ENCODE measurements at regions of chr7 and their contacts with region 1.

Region 1: DNA sequence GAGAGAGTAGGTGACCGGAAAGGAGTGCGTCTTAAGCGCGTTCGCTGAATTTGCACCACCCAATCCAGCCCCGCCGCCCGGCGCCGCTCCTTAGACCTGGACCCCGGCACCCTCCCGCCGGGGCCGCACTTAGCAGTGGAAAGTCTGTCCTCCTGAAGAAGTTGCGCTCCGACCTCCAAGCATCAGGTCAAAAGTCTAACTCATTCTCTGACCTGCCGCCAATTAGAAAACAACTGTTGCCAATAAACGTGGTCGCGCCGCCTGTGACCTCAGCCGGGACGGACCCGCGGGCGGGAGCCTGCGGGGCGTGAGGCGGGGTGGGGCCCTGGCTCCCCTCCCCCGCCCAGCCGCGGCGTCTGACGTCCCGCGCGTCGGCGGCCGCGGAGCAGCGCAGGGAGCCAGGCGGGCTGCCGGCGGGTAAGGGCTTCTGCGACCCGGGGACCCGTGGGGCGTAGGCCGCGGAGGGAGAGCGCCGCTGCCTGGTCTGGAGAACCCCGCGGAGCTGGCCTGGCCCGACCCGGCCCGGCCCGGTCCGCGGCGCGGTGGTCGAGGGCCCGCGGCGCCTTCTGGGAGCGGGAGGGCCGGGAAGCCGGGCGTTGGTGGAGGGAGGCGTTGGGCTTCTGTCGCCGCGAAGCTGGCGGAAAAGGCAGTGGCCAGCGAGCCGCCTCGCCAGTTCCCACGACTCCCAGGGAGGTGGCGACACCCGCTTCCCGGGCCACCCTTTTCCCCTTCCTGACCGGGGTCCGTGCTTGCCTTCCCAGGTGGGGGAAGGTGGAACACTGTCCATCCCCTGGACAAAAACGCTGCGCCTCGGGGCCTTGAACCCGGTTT is at the start of gene BCAP29:
- DNase-seq: peak; percentile 59 to 79
- ATAC-seq: peak; percentile 86 to 87
- H3K4me3 ChIP-seq: peak within 1 kb of the TSS; percentile 68 to 82 (median 82)
- H3K27ac ChIP-seq: peak within 1 kb of the TSS; percentile 89 to 95 (median 92)
- H3K4me1 ChIP-seq: peaks cover 10 to 12% of the 10 kb centered on the region in 2 donors
- H3K27me3 ChIP-seq: no peaks in the 10 kb centered on the region
- CTCF ChIP-seq: peak in 4 of 5 experiments; percentile 32 to 57 (median 39)
- POLR2A ChIP-seq: peak; percentile 94 to 95
- total RNA-seq, gene BCAP29: 125 to 152 (median 129) TPM

Region 2: DNA sequence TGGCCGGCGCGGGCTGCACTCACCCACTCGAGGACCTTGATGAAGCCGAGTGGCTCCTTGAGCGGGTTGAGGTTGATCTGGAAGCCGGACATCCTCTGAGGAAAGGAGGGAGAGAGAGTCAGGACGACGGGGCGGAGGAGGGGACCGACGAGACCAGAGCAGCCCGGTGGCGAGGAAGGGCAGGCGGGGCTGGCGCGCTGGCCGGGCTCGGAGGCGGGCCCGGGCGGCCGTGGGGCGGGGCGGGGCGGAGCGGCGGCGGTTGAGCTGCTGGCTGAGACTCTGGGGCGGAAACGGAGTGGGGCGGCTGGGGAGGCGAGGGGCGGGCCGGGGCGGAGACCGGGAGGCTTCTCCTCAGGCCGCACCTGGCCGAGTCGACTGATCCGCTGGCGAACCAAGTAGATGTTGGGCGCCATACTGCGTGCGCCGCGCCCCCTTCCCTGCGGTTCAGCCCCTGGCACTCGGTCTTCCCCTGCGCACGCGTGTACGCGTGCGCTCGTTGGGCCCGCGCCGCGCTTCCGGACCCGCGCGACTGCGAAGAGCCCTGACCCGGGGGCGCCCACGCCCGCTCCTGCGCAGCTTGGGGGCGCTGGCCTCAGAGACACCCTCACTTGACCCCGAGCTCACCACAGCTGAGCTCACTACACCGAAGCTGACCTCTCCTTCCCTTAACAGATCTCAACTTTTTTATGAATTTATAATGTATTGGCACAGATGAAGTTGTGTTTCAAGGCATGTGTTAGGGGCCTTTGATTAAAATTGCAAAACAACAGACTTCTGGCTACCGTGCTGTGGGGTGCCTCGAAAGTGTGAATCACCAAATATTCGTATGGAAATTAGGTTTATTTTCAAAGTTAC is 1467.8 kb before region 1 on chr7 and contains the start of gene SYPL1:
- in situ Hi-C with region 1: no loop called
- intact Hi-C with region 1: loop called (anchors 5 kb)
- DNase-seq: peak; percentile 90 to 92
- ATAC-seq: peak; percentile 77 to 80
- H3K4me3 ChIP-seq: peak within 1 kb of the TSS; percentile 71 to 82 (median 72)
- H3K27ac ChIP-seq: peak within 1 kb of the TSS; percentile 94 to 99 (median 98)
- H3K4me1 ChIP-seq: peaks cover 53 to 58% of the 10 kb centered on the region in 2 donors
- H3K27me3 ChIP-seq: no peaks in the 10 kb centered on the region
- CTCF ChIP-seq: peak in 1 of 5 experiments; percentile 31
- POLR2A ChIP-seq: peak; percentile 10 to 76
- total RNA-seq, gene SYPL1: 81.5 to 90.9 (median 83.2) TPM

Region 3: DNA sequence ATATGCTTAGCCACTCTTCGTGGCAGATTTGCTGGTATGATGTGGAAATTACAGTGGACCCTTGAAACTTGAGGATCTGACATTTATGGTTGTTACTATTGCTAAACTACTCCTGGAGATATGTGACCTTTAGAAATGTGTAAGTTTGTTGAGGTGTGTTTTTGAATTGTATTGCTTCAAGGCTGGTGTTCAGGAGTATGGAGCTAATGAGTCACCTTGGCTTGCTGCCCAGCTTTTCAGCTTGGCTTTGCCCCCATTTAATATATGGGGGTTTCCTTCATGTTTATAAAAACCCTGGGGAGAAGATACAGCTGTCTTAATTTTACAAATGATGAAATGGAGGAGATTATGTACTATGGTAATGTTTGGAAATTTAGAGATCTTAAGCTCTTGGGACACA is 399.7 kb before region 1 on chr7:
- in situ Hi-C with region 1: loop called in 1 of 4 experiments (anchors 25 kb)
- intact Hi-C with region 1: no loop called
- DNase-seq: no peak
- ATAC-seq: no peak
- H3K4me3 ChIP-seq: no peak overlapping the region
- H3K27ac ChIP-seq: peak overlapping the region; percentile 23 to 51 (median 38)
- H3K4me1 ChIP-seq: peaks cover 40 to 42% of the 10 kb centered on the region in 2 donors
- H3K27me3 ChIP-seq: no peaks in the 10 kb centered on the region
- CTCF ChIP-seq: no peak
- POLR2A ChIP-seq: no peak

Region 4: DNA sequence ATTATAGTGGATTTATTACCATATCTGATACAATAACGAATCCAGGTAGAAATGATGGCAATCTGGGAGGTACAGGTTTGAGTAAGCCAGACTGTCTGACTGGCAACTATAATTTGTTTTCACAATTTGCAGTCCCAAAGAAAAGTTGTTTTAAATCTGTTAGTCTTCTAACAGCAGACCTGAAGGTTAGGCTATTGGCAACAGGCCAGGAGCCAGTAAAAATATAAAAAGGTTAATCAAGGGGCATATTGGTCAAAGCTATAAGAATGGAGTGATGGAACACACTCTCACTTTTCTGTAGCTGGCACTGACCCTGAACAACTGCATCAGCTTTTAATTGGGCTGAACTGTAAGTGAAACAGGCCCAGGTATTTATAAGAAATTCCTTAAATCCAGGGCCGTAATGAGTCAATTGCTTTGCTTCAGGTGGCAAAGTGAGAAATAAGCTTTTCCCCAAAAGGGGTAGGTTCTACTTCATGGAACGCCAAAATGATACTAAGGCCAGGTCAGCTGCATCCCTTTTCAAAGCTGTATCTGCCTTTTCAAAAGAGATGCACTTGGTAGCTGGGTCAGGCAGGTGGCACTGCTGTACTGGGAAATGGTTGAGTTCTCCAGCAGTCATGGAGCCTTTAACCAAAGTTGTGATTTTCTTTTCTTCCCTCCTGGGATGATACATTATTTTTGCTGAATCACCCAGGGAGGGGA is 117.2 kb before region 1 on chr7:
- in situ Hi-C with region 1: no loop called
- intact Hi-C with region 1: loop called (anchors 2 kb)
- DNase-seq: peak; percentile 10 to 57
- ATAC-seq: peak; percentile 82 to 94
- H3K4me3 ChIP-seq: no peak overlapping the region
- H3K27ac ChIP-seq: no peak overlapping the region
- H3K4me1 ChIP-seq: no peaks in the 10 kb centered on the region
- H3K27me3 ChIP-seq: no peaks in the 10 kb centered on the region
- CTCF ChIP-seq: peak; percentile 55 to 72 (median 65)
- POLR2A ChIP-seq: no peak

Region 5: DNA sequence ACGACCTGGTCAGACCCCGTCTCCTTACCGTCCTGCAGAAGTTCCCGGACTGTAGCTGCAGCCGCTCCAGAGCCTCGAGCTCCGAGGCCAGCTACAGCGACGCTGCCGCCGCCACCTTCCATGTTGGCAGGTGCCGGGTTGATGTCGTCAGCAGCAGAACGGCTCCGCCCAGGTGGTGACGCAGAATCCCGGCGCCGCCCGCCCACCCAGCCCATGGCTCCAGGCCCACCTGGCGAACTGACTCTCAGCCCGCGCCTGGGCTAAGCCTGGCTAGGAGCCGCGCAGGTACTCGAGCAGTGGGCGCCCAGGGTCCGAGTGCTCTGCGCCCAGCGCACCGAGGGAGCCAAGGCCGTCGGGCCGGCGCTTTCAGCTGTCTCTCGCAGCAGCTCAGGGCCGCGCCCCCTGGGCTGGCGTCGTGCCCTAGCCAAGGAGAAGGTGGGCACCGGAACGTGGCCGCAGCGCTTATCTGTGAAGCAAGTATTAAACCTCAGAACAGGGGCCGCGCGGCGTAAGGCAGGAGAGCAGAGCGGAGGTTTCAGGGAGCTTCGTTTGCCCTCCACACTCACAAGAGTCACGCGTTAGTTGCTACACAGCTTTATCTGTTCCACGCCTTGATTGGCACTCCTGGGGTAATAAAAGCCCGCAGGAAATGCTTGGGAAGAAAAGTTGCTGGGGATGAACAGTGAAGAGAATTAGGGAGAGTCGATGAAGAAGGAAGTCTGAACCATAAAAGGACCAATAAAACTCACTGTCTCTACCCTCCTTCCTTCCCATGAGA is 16.1 kb before region 1 on chr7 and contains the starts of genes COG5 and DUS4L:
- in situ Hi-C with region 1: no loop called
- intact Hi-C with region 1: loop called (anchors 1 kb)
- DNase-seq: peak; percentile 69 to 78
- ATAC-seq: peak; percentile 96 to 97
- H3K4me3 ChIP-seq: peak within 1 kb of the TSS; percentile 78 to 99 (median 95)
- H3K27ac ChIP-seq: peak within 1 kb of the TSS; percentile 92 to 99 (median 98)
- H3K4me1 ChIP-seq: peaks cover 37 to 41% of the 10 kb centered on the region in 2 donors
- H3K27me3 ChIP-seq: no peaks in the 10 kb centered on the region
- CTCF ChIP-seq: no peak
- POLR2A ChIP-seq: peak; percentile 54 to 56
- total RNA-seq, gene COG5: 20.8 to 49.7 (median 25.7) TPM
- total RNA-seq, gene DUS4L: 3.1 to 5.8 (median 3.6) TPM

Region 6: DNA sequence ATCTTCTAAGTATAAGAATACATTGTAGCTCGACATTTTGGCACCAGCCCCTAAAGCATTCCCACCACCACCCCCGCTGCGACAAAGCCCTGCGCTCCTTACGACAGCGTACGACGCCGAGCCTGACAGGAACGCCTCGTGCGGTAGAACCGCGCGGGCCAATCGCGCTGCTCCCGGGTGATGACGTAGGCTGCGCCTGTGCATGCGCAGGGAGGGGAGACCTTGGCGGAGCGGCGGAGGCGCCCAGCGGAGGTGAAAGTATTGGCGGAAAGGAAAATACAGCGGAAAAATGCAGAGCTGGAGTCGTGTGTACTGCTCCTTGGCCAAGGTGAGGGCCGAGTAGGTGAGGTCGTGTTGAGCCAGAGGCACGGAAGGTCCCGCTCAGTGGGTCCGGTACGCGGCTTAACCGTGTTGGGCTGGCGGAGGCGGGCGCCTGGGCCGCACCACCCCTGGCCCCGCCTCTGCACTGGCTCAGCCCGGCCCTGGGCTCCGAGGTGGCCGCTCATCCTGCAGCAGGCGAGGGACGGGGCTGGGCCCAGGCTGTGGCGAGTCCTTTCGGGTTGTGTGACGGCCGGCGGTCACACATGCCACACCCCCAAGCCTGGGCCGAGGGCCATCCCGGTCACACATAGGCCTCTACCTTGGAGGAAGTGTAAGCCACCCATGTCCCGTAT is 311.0 kb after region 1 on chr7 and contains the start of gene DLD:
- in situ Hi-C with region 1: loop called in 2 of 4 experiments (anchors 25 kb)
- intact Hi-C with region 1: loop called (anchors 5 kb)
- DNase-seq: peak; percentile 89 to 92
- ATAC-seq: peak; percentile 98
- H3K4me3 ChIP-seq: peak within 1 kb of the TSS; percentile 68 to 90 (median 84)
- H3K27ac ChIP-seq: peak within 1 kb of the TSS; percentile 93 to 98 (median 96)
- H3K4me1 ChIP-seq: peaks cover 36 to 42% of the 10 kb centered on the region in 2 donors
- H3K27me3 ChIP-seq: no peaks in the 10 kb centered on the region
- CTCF ChIP-seq: no peak
- POLR2A ChIP-seq: peak; percentile 88 to 91
- total RNA-seq, gene DLD: 110 to 157 (median 146) TPM

Region 7: DNA sequence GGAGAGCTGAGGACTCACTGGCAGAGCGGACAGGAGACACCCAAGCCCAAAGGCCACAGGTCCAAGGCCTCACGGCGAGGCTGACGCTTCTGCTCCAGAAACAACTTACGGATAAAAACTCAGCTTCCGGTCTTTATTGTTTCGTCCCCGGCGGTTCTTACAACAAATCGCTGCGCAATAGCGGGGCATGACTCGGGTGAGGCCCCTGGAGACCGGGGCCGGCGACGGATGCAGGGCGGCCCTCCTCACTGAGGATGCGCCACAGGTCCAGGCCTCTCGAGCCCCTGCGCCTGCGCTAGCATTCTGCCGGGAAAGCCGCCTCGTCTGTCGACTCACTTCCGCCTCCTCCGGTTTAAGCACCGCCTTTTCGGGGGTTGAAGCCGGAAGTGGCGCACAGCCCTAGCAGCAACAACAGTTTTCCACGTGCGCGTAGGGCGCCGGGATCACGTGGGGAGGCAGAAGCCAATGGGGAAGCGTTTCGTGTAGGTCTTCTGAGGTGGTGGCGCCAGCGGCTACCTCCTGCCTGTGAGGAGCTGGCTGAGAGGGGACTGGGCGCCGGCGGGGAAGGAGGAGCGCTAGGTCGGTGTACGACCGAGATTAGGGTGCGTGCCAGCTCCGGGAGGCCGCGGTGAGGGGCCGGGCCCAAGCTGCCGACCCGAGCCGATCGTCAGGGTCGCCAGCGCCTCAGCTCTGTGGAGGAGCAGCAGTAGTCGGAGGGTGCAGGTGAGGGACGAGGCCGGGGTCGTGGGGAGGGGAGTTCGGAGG is 989.5 kb after region 1 on chr7 and contains the starts of genes DNAJB9 and THAP5:
- in situ Hi-C with region 1: no loop called
- intact Hi-C with region 1: loop called (anchors 5 kb)
- DNase-seq: peak; percentile 99
- ATAC-seq: peak; percentile 93 to 95
- H3K4me3 ChIP-seq: peak within 1 kb of the TSS; percentile 58 to 95 (median 84)
- H3K27ac ChIP-seq: peak within 1 kb of the TSS; percentile 86 to 99 (median 96)
- H3K4me1 ChIP-seq: peaks cover 38 to 58% of the 10 kb centered on the region in 2 donors
- H3K27me3 ChIP-seq: no peaks in the 10 kb centered on the region
- CTCF ChIP-seq: no peak
- POLR2A ChIP-seq: peak; percentile 98 to 99
- total RNA-seq, gene DNAJB9: 24.2 to 96.6 (median 67.8) TPM
- total RNA-seq, gene THAP5: 22.5 to 36.0 (median 25.6) TPM

Measured in gastrocnemius medialis (tissue), 4 donors.